Endothelial cell of umbilical vein (primary cell): ENCODE measurements at regions of chr22 and their contacts with region 1.

Region 1: DNA sequence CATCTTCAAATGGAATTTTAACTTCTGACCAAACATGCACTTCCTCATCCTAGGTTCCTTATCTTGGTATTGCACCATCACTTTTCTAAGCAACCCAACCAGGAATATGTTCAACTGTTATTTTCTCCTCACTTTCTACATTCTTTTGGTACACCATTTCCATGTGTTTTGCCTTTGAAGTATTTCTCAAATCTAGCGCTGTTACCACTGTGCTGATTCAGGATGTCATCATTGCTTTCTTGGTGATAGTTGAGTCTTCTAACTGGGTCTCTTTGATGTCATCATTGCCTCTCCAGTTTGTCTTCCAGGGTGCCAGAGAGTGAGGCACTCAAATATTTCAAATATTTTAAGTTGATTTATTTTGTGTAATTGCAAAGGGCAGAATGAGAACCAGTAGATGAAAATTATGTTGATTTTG is 47.5 kb downstream of the HORMAD2 start:
- DNase-seq: no peak
- H3K4me3 ChIP-seq: no peak overlapping the region
- H3K27ac ChIP-seq: no peak overlapping the region
- H3K4me1 ChIP-seq: no peaks in the 10 kb centered on the region
- H3K27me3 ChIP-seq: peaks cover 13 to 16% of the 10 kb centered on the region in 2 experiments
- CTCF ChIP-seq: no peak
- POLR2A ChIP-seq: no peak

Region 2: GRCh38 chr22:30159561-30160353 is 32.0 kb after region 1 on chr22:
- CTCF ChIA-PET with region 1: no interaction called
- POLR2A ChIA-PET with region 1: no interaction called
- dilution Hi-C with region 1: no loop called
- intact Hi-C with region 1: loop called (anchors 2 kb)
- DNase-seq: peak; percentile 3
- H3K4me3 ChIP-seq: no peak overlapping the region
- H3K27ac ChIP-seq: no peak overlapping the region
- H3K4me1 ChIP-seq: no peaks in the 10 kb centered on the region
- H3K27me3 ChIP-seq: peaks cover 32 to 50% of the 10 kb centered on the region in 2 experiments
- CTCF ChIP-seq: no peak
- POLR2A ChIP-seq: no peak